Left colon (tissue), 2 donors: ENCODE measurements at regions of chr19 and their contacts with region 1.

Region 1: GRCh38 chr19:46404055-46404752 is 9.2 kb downstream of the CCDC8 start:
- DNase-seq: peak; percentile 62 to 74
- ATAC-seq: peak; percentile 91

Region 2: DNA sequence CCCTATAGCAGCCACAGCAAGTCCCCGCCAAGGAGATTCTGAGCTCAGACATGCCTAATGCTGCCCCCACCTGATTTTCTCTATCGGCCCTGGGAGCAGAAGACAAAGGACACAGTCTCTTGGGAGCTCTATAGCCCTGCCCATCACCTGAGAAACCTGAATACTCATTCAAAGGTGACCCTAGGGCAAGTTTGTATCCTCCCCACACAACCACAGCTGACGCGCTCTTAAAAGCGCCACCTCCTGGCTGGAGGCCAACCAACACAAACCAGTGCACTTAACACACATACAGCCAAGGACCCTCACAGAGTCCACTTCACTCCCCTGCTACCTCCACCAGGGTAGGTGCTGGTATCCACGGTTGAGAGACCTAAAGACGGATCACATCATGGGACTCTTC is 354.6 kb before region 1 on chr19:
- intact Hi-C with region 1: no loop called
- DNase-seq: no peak
- ATAC-seq: no peak

Region 3: GRCh38 chr19:46283771-46284170 is 120.4 kb before region 1 on chr19:
- intact Hi-C with region 1: loop called in 1 of 2 experiments (anchors 5 kb)
- DNase-seq: no peak
- ATAC-seq: no peak

Region 4: GRCh38 chr19:46328079-46328478 is 76.1 kb before region 1 on chr19:
- intact Hi-C with region 1: no loop called
- DNase-seq: no peak
- ATAC-seq: no peak

Region 5: DNA sequence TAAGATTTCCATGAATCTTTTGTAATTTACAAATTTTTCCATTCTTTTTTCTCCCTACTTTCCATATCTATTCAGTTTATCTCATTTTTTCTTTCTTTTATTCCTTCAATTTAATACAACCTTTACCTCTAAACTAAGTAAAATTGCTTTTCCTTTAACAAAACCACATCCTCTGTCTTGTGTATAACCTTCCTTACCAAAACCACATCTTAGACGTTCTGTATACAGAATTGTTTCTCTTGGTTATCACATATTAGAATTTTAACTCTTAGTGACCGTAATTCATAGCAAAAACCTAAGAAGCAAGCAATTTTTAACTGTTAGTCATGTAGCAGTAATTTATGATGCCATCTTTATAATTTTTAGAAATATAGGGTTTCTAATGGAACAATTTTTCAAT is 42.3 kb before region 1 on chr19:
- intact Hi-C with region 1: no loop called
- DNase-seq: no peak
- ATAC-seq: no peak

Region 6: GRCh38 chr19:46513461-46514236 is 109.4 kb after region 1 on chr19:
- intact Hi-C with region 1: loop called in 1 of 2 experiments (anchors 10 kb)
- DNase-seq: peak; percentile 47 to 77
- ATAC-seq: peak; percentile 86